Ascending aorta (tissue), 2 donors: ENCODE measurements at regions of chr13 and their contacts with region 1.

Region 1: GRCh38 chr13:29131881-29132668 is 311.9 kb downstream of the MTUS2 start:
- DNase-seq: no peak
- H3K4me3 ChIP-seq: no peak overlapping the region
- H3K27ac ChIP-seq: peak overlapping the region; percentile 34 to 58
- H3K4me1 ChIP-seq: no peaks in the 10 kb centered on the region
- H3K27me3 ChIP-seq: no peaks in the 10 kb centered on the region
- CTCF ChIP-seq: no peak

Region 2: GRCh38 chr13:29435125-29435911 is 303.2 kb after region 1 on chr13:
- intact Hi-C with region 1: loop called (anchors 10 kb)
- DNase-seq: peak in 1 of 2 donors; percentile 63
- H3K4me3 ChIP-seq: no peak overlapping the region
- H3K27ac ChIP-seq: peak overlapping the region; percentile 88 to 90
- H3K4me1 ChIP-seq: peaks cover 22 to 59% of the 10 kb centered on the region in 2 donors
- H3K27me3 ChIP-seq: no peaks in the 10 kb centered on the region
- CTCF ChIP-seq: no peak